IMR-90 (cell line): ENCODE measurements at regions of chr16 and their contacts with region 1.

Region 1: GRCh38 chr16:67521095-67521804 is 7.4 kb upstream of the RIPOR1 start:
- DNase-seq: peak; percentile 94
- ATAC-seq: peak; percentile 95
- H3K4me3 ChIP-seq: peak overlapping the region; percentile 45
- H3K27ac ChIP-seq: peak overlapping the region; percentile 76
- H3K4me1 ChIP-seq: peaks cover 3% of the 10 kb centered on the region
- H3K27me3 ChIP-seq: no peaks in the 10 kb centered on the region
- CTCF ChIP-seq: peak; percentile 100
- POLR2A ChIP-seq: peak; percentile 52
- RAD21 ChIP-seq: peak; percentile 94

Region 2: GRCh38 chr16:67561824-67562525 is 40.7 kb after region 1 on chr16:
- CTCF ChIA-PET with region 1: interaction called, 11 read pairs
- POLR2A ChIA-PET with region 1: interaction called, 3 read pairs
- dilution Hi-C with region 1: no loop called
- in situ Hi-C with region 1: no loop called
- intact Hi-C with region 1: no loop called
- DNase-seq: peak; percentile 95
- ATAC-seq: peak; percentile 86
- H3K4me3 ChIP-seq: peak overlapping the region; percentile 95
- H3K27ac ChIP-seq: peak overlapping the region; percentile 72
- H3K4me1 ChIP-seq: peaks cover 5% of the 10 kb centered on the region
- H3K27me3 ChIP-seq: no peaks in the 10 kb centered on the region
- CTCF ChIP-seq: 0 out of 2 replicates have a peak, but pooled peaks have one; percentile 4
- POLR2A ChIP-seq: no peak
- RAD21 ChIP-seq: no peak

Region 3: GRCh38 chr16:67649494-67649931 is 128.3 kb after region 1 on chr16:
- CTCF ChIA-PET with region 1: interaction called, 6 read pairs
- POLR2A ChIA-PET with region 1: interaction called, 13 read pairs
- dilution Hi-C with region 1: no loop called
- in situ Hi-C with region 1: no loop called
- intact Hi-C with region 1: loop called (anchors 1 kb)
- DNase-seq: no peak
- ATAC-seq: no peak
- H3K4me3 ChIP-seq: no peak overlapping the region
- H3K27ac ChIP-seq: no peak overlapping the region
- H3K4me1 ChIP-seq: peaks cover 4% of the 10 kb centered on the region; the same call in 1 of the 2 replicates
- H3K27me3 ChIP-seq: peaks cover 74% of the 10 kb centered on the region
- CTCF ChIP-seq: no peak
- POLR2A ChIP-seq: no peak
- RAD21 ChIP-seq: no peak

Region 4: DNA sequence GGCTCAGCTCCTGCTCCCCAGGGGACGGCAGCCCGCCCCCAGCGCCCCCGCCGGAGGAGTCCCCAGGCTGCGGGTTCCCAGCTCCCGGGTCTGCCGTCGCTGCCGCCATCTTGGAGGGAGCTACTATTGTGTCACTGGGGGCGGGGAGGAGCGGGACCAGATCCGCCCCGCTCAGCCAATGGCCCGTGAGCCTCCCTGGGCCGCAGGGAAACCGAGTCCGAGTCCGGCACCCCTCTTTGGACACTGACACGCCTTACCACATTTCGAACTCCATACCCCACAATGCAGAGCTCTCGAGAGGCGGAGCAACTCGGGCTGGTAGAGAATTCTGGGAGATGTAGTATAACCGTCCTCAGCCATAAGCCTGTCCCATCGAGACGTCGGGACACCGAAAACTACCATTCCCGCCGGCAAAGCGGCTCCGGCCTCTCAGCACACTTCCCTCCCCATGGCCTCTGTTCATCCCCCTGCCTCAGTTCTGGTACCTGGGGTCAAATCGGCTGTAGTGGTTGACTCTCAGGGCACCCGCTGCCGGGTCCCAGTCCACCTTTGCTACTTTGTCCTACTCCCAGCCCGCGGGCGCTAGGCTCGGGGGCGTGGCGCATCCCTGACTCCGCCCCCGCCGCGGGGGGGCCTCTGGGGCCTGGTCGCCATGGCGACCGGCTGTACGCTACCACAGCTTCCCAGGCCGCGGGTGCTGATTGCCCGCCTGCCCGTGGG is 285.3 kb after region 1 on chr16 and contains the starts of genes RANBP10 and TSNAXIP1:
- CTCF ChIA-PET with region 1: no interaction called
- POLR2A ChIA-PET with region 1: no interaction called
- dilution Hi-C with region 1: no loop called
- in situ Hi-C with region 1: no loop called
- intact Hi-C with region 1: loop called (anchors 10 kb)
- DNase-seq: peak; percentile 99
- ATAC-seq: peak; percentile 96
- H3K4me3 ChIP-seq: peak within 1 kb of the TSS; percentile 76
- H3K27ac ChIP-seq: peak within 1 kb of the TSS; percentile 59
- H3K4me1 ChIP-seq: peaks cover 6% of the 10 kb centered on the region
- H3K27me3 ChIP-seq: no peaks in the 10 kb centered on the region
- CTCF ChIP-seq: no peak
- POLR2A ChIP-seq: peak; percentile 82
- RAD21 ChIP-seq: no peak
- total RNA-seq, gene RANBP10: 2.2 and 2.7 TPM in 2 replicates
- total RNA-seq, gene TSNAXIP1: 0.56 and 0.72 TPM in 2 replicates